ENCODE measurements at regions of chr19 and their contacts with region 1.

Region 1: DNA sequence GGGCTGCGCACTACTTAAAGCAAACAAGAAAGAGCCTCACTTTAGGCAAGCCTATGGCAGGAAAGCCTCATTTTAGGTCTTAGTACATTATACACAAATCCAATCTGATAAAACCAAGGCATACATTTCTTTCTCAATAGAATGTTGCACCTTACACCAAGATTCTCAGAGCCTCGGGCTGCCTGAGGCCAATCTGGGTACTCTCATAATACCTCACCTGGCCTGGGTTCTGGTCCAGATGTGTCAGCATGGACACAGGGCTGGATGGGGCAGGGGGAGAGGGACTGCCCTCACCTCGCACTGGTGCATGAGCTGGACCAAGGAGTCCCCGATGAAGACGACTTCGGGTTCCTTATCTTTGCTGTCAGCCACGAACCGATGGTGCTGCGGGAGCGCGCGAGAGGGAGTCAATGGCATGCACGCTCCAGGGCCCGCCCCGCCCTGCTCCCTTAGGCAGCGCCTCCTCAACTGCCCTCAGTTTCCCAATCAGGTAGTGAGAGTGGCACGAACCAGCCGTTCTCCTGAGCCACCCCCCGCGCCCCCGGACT is at the start of gene PRR19:
- DNase-seq: no peak
- ATAC-seq: no peak
- H3K4me3 Mint-ChIP-seq: peak within 1 kb of the TSS; percentile 84
- H3K27ac Mint-ChIP-seq: peak within 1 kb of the TSS; percentile 81
- H3K4me1 Mint-ChIP-seq: peaks cover 25% of the 10 kb centered on the region
- H3K27me3 Mint-ChIP-seq: no peaks in the 10 kb centered on the region
- CTCF ChIP-seq: no peak
- total RNA-seq, gene PRR19: 0.20 and 0.33 TPM in 2 replicates

Region 2: GRCh38 chr19:42254989-42255765 is 46.6 kb before region 1 on chr19 and contains the start of gene ERF:
- CTCF ChIA-PET with region 1: no interaction called
- POLR2A ChIA-PET with region 1: interaction called, 4 read pairs
- intact Hi-C with region 1: loop called (anchors 1 kb)
- DNase-seq: peak; percentile 97
- ATAC-seq: peak; percentile 76
- H3K4me3 Mint-ChIP-seq: peak within 1 kb of the TSS; percentile 84
- H3K27ac Mint-ChIP-seq: peak within 1 kb of the TSS; percentile 73
- H3K4me1 Mint-ChIP-seq: peaks cover 28% of the 10 kb centered on the region
- H3K27me3 Mint-ChIP-seq: peaks cover 5% of the 10 kb centered on the region
- CTCF ChIP-seq: no peak
- total RNA-seq, gene ERF: 47.9 and 48.1 TPM in 2 replicates

Region 3: GRCh38 chr19:42268704-42269477 is 32.8 kb before region 1 on chr19 and contains the start of gene CIC:
- CTCF ChIA-PET with region 1: no interaction called
- POLR2A ChIA-PET with region 1: interaction called, 4 read pairs
- intact Hi-C with region 1: loop called (anchors 1 kb)
- DNase-seq: peak; percentile 95
- ATAC-seq: peak; percentile 81
- H3K4me3 Mint-ChIP-seq: peak within 1 kb of the TSS; percentile 88
- H3K27ac Mint-ChIP-seq: peak within 1 kb of the TSS; percentile 94
- H3K4me1 Mint-ChIP-seq: peaks cover 31% of the 10 kb centered on the region
- H3K27me3 Mint-ChIP-seq: no peaks in the 10 kb centered on the region
- CTCF ChIP-seq: no peak
- total RNA-seq, gene CIC: 85.4 and 96.5 TPM in 2 replicates

Region 4: DNA sequence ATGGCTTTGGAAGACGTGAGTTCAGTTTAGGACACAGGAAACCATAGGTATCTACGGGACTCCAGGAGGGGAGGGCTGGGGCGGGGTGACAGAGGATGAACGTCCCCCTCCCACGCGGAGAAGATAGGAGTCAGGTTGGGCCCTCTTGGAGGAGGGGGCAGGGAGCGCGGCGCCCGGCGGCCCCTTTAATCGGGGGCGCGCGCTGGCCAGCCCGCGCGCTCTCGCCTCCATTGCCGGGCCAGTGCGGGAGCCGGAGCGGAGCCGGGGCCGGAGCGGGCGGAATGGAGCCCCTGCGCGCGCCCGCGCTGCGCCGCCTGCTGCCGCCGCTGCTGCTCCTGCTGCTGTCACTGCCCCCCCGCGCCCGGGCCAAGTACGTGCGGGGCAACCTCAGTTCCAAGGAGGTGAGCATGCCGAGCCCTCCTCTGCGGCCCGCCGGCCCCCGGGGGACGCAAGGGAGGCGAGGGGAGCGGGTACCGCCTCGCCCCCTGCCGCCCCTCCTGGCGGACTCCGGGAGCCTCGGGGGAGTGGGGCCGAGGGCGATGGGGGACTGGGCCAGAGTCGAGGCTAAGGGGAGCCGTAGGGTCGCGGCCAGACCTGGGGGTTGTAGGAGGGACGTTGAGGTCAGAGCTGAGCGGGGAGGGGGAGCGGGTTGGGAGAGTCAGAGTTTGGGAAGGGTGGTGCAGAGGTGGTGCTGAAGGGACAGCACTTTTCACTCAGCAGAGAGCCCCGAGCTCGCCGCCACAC is 11.5 kb after region 1 on chr19 and contains the start of gene TMEM145:
- CTCF ChIA-PET with region 1: no interaction called
- POLR2A ChIA-PET with region 1: no interaction called
- intact Hi-C with region 1: no loop called
- DNase-seq: no peak
- ATAC-seq: peak; percentile 77
- H3K4me3 Mint-ChIP-seq: peak within 1 kb of the TSS; percentile 68
- H3K27ac Mint-ChIP-seq: no peak within 1 kb of the TSS
- H3K4me1 Mint-ChIP-seq: peaks cover 19% of the 10 kb centered on the region
- H3K27me3 Mint-ChIP-seq: peaks cover 28% of the 10 kb centered on the region
- CTCF ChIP-seq: no peak
- total RNA-seq, gene TMEM145: not detected in 2 replicates

Region 5: DNA sequence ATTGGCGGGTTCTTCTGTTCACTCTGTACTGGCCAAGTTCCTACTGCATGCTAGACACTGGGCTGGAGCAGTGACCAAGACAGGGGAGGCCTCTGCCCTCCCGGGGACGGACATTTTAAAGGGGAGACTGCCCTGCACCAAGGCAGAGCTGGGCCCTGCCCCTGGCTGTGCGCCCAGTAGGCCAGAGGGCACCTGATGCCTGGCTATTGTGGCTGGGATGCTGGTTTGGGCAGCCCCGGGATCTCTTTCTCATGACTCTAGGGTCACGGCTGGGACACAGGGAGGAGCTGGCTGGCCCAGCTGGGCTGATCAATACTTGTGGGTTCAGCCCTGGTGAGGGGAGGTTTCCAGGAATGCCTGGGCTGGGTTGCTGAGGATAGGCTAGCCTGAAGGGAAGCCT is 107.7 kb after region 1 on chr19:
- CTCF ChIA-PET with region 1: no interaction called
- POLR2A ChIA-PET with region 1: interaction called, 11 read pairs
- intact Hi-C with region 1: no loop called
- DNase-seq: no peak
- ATAC-seq: no peak
- H3K4me3 Mint-ChIP-seq: no peak overlapping the region
- H3K27ac Mint-ChIP-seq: no peak overlapping the region
- H3K4me1 Mint-ChIP-seq: peaks cover 3% of the 10 kb centered on the region
- H3K27me3 Mint-ChIP-seq: no peaks in the 10 kb centered on the region
- CTCF ChIP-seq: no peak

Region 6: GRCh38 chr19:42965176-42965575 is 663.4 kb after region 1 on chr19:
- CTCF ChIA-PET with region 1: no interaction called
- POLR2A ChIA-PET with region 1: no interaction called
- intact Hi-C with region 1: no loop called
- DNase-seq: no peak
- ATAC-seq: no peak
- H3K4me3 Mint-ChIP-seq: no peak overlapping the region
- H3K27ac Mint-ChIP-seq: no peak overlapping the region
- H3K4me1 Mint-ChIP-seq: no peaks in the 10 kb centered on the region
- H3K27me3 Mint-ChIP-seq: peaks cover 5% of the 10 kb centered on the region
- CTCF ChIP-seq: no peak